ENCODE measurements at regions of chr16 and their contacts with region 1.

Region 1: GRCh38 chr16:85675251-85675927 is 13.4 kb downstream of the GINS2 start:
- DNase-seq: peak; percentile 44 to 59 (median 53)
- H3K4me3 ChIP-seq: no peak overlapping the region
- H3K27ac ChIP-seq: no peak overlapping the region
- H3K4me1 ChIP-seq: no peaks in the 10 kb centered on the region
- H3K27me3 ChIP-seq: no peaks in the 10 kb centered on the region

Region 2: GRCh38 chr16:85593494-85594221 is 81.7 kb before region 1 on chr16:
- CTCF ChIA-PET with region 1: no interaction called
- POLR2A ChIA-PET with region 1: no interaction called
- DNase-seq: peak in 2 of 3 donors; percentile 57 to 68
- H3K4me3 ChIP-seq: no peak overlapping the region
- H3K27ac ChIP-seq: no peak overlapping the region
- H3K4me1 ChIP-seq: peaks cover 8 to 30% (median 21%) of the 10 kb centered on the region in 4 experiments
- H3K27me3 ChIP-seq: no peaks in the 10 kb centered on the region

Region 3: DNA sequence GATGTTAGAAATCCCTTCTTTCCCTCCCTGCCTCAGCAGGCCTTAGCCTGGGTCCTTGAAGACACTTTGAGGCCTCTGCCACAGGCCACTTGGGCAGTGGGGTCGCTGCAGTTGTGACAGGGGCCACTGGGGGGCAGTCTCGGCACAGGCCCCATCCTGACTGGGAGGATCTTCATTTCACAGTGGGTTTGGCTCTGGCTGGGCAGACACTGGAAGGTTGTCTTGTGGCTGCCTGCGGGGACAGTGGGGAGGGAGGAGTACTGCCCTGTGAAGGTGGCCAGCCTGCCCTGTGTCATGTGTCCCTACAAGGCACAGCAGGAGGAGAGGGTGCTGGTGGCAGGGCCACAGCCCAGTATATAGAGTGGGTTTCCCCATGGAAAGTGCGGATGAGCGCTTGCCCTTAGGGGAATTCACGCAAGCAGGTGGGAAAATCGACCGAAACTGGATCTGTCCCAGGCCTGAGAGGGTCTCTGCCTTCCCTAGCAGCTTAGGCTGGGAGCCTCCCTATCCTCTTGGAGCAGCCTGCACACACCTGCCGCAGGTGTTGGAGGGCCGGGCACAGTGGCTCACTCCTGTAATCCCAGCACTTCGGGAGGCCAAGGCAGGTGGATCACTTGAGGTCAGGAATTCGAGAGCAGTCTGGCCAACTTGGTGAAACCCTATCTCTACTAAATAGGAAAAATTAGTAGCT is 15.4 kb before region 1 on chr16:
- CTCF ChIA-PET with region 1: interaction called, 37 read pairs
- POLR2A ChIA-PET with region 1: no interaction called
- DNase-seq: peak; percentile 47 to 68 (median 67)
- H3K4me3 ChIP-seq: no peak overlapping the region
- H3K27ac ChIP-seq: no peak overlapping the region
- H3K4me1 ChIP-seq: no peaks in the 10 kb centered on the region
- H3K27me3 ChIP-seq: no peaks in the 10 kb centered on the region

Region 4: GRCh38 chr16:85717393-85718121 is 42.2 kb after region 1 on chr16:
- CTCF ChIA-PET with region 1: interaction called, 26 read pairs
- POLR2A ChIA-PET with region 1: no interaction called
- DNase-seq: peak; percentile 62 to 79 (median 70)
- H3K4me3 ChIP-seq: no peak overlapping the region
- H3K27ac ChIP-seq: no peak overlapping the region
- H3K4me1 ChIP-seq: peaks cover 0 to 25% (median 20%) of the 10 kb centered on the region in 4 experiments
- H3K27me3 ChIP-seq: peaks cover 0 to 4% (median 0%) of the 10 kb centered on the region in 5 experiments

Region 5: GRCh38 chr16:85860413-85861094 is 185.2 kb after region 1 on chr16:
- CTCF ChIA-PET with region 1: no interaction called
- POLR2A ChIA-PET with region 1: no interaction called
- DNase-seq: no peak
- H3K4me3 ChIP-seq: no peak overlapping the region
- H3K27ac ChIP-seq: no peak overlapping the region
- H3K4me1 ChIP-seq: peaks cover 0 to 8% (median 0%) of the 10 kb centered on the region in 4 experiments
- H3K27me3 ChIP-seq: peaks cover 0 to 10% (median 3%) of the 10 kb centered on the region in 5 experiments